Endothelial cell of umbilical vein (primary cell): ENCODE measurements at regions of chr9 and their contacts with region 1.

Region 1: DNA sequence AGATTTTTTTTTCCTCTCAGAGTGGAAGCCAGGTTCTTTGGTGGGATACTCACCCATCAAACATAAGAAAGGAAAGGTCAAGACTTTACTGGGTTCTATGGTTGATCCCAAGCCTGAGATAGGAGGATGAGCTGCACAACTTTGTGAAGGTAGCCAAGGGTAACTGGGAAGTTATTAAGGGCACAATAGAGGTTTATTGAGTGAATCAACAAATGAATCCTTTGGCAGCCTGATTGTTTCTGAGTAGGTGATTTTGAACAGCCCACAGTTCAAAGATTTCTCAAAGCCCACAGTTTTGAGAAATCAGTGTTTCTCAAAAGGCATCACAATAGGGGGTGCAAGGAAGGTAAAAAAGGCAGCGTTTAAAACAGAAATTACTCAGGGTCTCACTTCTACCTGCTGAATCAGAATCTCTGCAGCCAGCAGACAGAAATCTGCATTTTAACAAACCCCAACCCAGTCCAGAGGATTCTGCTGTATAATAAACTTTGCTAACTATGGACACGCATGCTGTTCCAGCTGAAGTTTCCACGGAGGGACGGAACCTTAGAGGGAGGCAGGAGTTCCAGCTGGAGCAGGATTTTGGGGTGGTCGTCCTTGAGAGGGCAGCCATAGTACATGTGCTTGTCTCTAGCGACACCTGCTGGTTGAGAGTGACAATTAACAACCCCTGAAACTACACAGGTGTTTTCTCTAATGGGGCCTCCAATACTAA is 32.7 kb upstream of the FSD1L start:
- DNase-seq: peak; percentile 51
- H3K4me3 ChIP-seq: no peak overlapping the region
- H3K27ac ChIP-seq: no peak overlapping the region
- H3K4me1 ChIP-seq: no peaks in the 10 kb centered on the region
- H3K27me3 ChIP-seq: no peaks in the 10 kb centered on the region
- CTCF ChIP-seq: peak; percentile 70 to 72
- POLR2A ChIP-seq: no peak

Region 2: GRCh38 chr9:104747558-104748358 is 667.3 kb before region 1 on chr9 and contains the start of gene NIPSNAP3A:
- CTCF ChIA-PET with region 1: no interaction called
- POLR2A ChIA-PET with region 1: no interaction called
- dilution Hi-C with region 1: no loop called
- intact Hi-C with region 1: loop called (anchors 1 kb)
- DNase-seq: peak; percentile 84
- H3K4me3 ChIP-seq: peak within 1 kb of the TSS; percentile 65 to 80 (median 79)
- H3K27ac ChIP-seq: peak within 1 kb of the TSS; percentile 79
- H3K4me1 ChIP-seq: peaks cover 13% of the 10 kb centered on the region
- H3K27me3 ChIP-seq: no peaks in the 10 kb centered on the region
- CTCF ChIP-seq: no peak
- POLR2A ChIP-seq: peak; percentile 79
- total RNA-seq, gene NIPSNAP3A: 27.2 and 27.8 TPM in 2 replicates

Region 3: DNA sequence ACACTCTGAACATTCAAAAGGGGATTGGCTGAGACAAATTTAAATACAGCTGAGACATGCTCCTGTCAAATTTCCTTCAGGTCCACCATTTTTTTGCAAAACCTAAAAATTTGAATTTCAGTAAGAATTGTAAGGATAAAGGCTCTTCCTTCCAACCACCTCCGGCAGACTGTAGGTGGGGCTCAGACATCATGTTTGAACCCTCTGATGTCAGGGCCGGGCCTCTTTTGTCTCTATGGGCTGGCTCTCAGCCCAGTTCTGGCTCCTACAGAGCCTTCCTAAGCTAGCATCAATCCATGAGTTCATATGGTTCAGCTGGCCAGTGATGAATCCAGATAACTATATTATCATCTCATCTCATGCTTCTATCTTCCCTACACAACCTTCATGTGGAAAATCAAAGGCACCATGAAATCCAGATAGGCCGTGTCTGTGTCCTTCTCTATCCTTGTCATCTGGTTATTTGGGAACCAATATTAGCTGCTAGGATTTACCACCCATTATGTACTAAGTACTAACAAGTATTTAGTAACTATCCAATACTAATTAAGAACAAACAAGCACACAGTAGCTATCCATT is 607.0 kb before region 1 on chr9:
- CTCF ChIA-PET with region 1: interaction called, 4 read pairs
- POLR2A ChIA-PET with region 1: interaction called, 5 read pairs
- dilution Hi-C with region 1: no loop called
- intact Hi-C with region 1: loop called (anchors 1 kb)
- DNase-seq: peak; percentile 46
- H3K4me3 ChIP-seq: no peak overlapping the region
- H3K27ac ChIP-seq: no peak overlapping the region
- H3K4me1 ChIP-seq: no peaks in the 10 kb centered on the region
- H3K27me3 ChIP-seq: no peaks in the 10 kb centered on the region
- CTCF ChIP-seq: peak; percentile 24 to 48
- POLR2A ChIP-seq: no peak

Region 4: DNA sequence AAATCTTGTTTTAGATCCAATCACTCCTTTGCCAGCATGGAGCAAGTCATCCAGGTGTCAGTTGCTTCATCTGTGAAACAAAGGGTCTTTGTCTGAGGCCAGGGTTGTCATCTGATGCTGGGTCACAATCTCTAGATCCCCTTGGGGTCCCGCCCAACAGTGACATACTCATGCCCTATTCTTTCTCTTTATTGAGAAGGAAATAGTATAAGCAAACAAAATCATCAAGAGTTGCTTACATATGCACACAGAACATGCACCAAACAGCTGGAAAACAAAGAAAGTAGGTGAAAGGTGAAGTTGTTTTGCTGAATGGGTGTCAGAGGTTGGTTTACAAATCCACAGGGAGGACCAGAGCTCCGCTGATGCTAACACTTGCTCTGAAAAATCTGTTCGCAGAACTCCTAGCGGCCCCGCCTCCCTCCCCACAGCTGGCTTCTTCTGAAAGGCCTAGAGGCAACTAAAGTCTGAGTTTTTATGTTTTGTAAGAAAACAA is 276.8 kb before region 1 on chr9:
- CTCF ChIA-PET with region 1: no interaction called
- POLR2A ChIA-PET with region 1: no interaction called
- dilution Hi-C with region 1: no loop called
- intact Hi-C with region 1: no loop called
- DNase-seq: no peak
- H3K4me3 ChIP-seq: no peak overlapping the region
- H3K27ac ChIP-seq: no peak overlapping the region
- H3K4me1 ChIP-seq: no peaks in the 10 kb centered on the region
- H3K27me3 ChIP-seq: no peaks in the 10 kb centered on the region
- CTCF ChIP-seq: no peak
- POLR2A ChIP-seq: no peak

Region 5: DNA sequence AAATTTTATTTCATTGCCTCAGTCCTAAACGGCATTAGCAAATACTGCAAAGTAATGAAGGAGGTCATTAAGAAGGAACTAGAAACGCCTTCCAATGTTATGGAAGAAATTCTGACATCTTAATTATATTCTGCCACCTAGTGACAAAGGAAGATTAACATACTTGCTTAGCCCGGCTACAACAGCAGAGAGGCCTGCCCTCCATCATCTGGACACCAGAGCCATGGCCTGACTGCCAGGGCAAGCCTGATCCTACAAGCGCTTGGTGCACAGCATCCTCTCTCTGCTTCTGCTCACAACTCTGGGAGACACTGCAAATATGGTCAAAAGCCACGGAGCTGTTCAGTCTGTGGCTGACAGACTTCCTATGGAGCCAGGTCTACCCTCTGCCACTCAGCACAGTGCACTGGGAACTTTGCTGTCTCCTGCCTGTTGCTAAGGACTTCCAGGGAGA is 257.9 kb before region 1 on chr9:
- CTCF ChIA-PET with region 1: interaction called, 9 read pairs
- POLR2A ChIA-PET with region 1: no interaction called
- dilution Hi-C with region 1: no loop called
- intact Hi-C with region 1: loop called (anchors 1 kb)
- DNase-seq: peak; percentile 63
- H3K4me3 ChIP-seq: no peak overlapping the region
- H3K27ac ChIP-seq: no peak overlapping the region
- H3K4me1 ChIP-seq: no peaks in the 10 kb centered on the region
- H3K27me3 ChIP-seq: no peaks in the 10 kb centered on the region
- CTCF ChIP-seq: peak; percentile 22 to 40
- POLR2A ChIP-seq: no peak

Region 6: GRCh38 chr9:105233873-105234272 is 181.2 kb before region 1 on chr9:
- CTCF ChIA-PET with region 1: no interaction called
- POLR2A ChIA-PET with region 1: no interaction called
- dilution Hi-C with region 1: no loop called
- intact Hi-C with region 1: no loop called
- DNase-seq: peak; percentile 50
- H3K4me3 ChIP-seq: no peak overlapping the region
- H3K27ac ChIP-seq: no peak overlapping the region
- H3K4me1 ChIP-seq: no peaks in the 10 kb centered on the region
- H3K27me3 ChIP-seq: no peaks in the 10 kb centered on the region
- CTCF ChIP-seq: no peak
- POLR2A ChIP-seq: no peak

Region 7: GRCh38 chr9:105244003-105244733 is 170.9 kb before region 1 on chr9 and contains the start of gene SLC44A1:
- CTCF ChIA-PET with region 1: interaction called, 5 read pairs
- POLR2A ChIA-PET with region 1: no interaction called
- dilution Hi-C with region 1: no loop called
- intact Hi-C with region 1: loop called (anchors 1 kb)
- DNase-seq: peak; percentile 96
- H3K4me3 ChIP-seq: peak within 1 kb of the TSS; percentile 69 to 90 (median 72)
- H3K27ac ChIP-seq: peak within 1 kb of the TSS; percentile 95
- H3K4me1 ChIP-seq: peaks cover 28% of the 10 kb centered on the region
- H3K27me3 ChIP-seq: no peaks in the 10 kb centered on the region
- CTCF ChIP-seq: no peak
- POLR2A ChIP-seq: peak; percentile 62
- total RNA-seq, gene SLC44A1: 35.3 and 37.7 TPM in 2 replicates